ENCODE measurements at regions of chr5 and their contacts with region 1.

Region 1: GRCh38 chr5:97142521-97143254 is at the start of gene LIX1:
- DNase-seq: peak in 5 of 9 experiments; percentile 3 to 52 (median 32)
- ATAC-seq: peak; percentile 58
- H3K4me3 ChIP-seq: no peak within 1 kb of the TSS
- H3K4me3 Mint-ChIP-seq: no peak within 1 kb of the TSS
- H3K27ac ChIP-seq: no peak within 1 kb of the TSS
- H3K27ac Mint-ChIP-seq: no peak within 1 kb of the TSS
- H3K4me1 ChIP-seq: no peaks in the 10 kb centered on the region
- H3K4me1 Mint-ChIP-seq: no peaks in the 10 kb centered on the region
- H3K27me3 ChIP-seq: peaks cover 0 to 3% of the 10 kb centered on the region in 2 experiments
- H3K27me3 Mint-ChIP-seq: peaks cover 15% of the 10 kb centered on the region
- CTCF ChIP-seq: peak; percentile 29
- total RNA-seq, gene LIX1: not detected

Region 2: GRCh38 chr5:96997265-96997859 is 145.3 kb before region 1 on chr5:
- CTCF ChIA-PET with region 1: interaction called, 6 read pairs
- POLR2A ChIA-PET with region 1: no interaction called
- intact Hi-C with region 1: loop called in 1 of 2 experiments (anchors 5 kb)
- DNase-seq: peak in 4 of 9 experiments; percentile 19 to 62 (median 35)
- ATAC-seq: peak; percentile 77
- H3K4me3 ChIP-seq: no peak overlapping the region
- H3K4me3 Mint-ChIP-seq: no peak overlapping the region
- H3K27ac ChIP-seq: no peak overlapping the region
- H3K27ac Mint-ChIP-seq: peak overlapping the region; percentile 17
- H3K4me1 ChIP-seq: no peaks in the 10 kb centered on the region
- H3K4me1 Mint-ChIP-seq: peaks cover 42% of the 10 kb centered on the region
- H3K27me3 ChIP-seq: no peaks in the 10 kb centered on the region
- H3K27me3 Mint-ChIP-seq: no peaks in the 10 kb centered on the region
- CTCF ChIP-seq: peak; percentile 73

Region 3: GRCh38 chr5:97044052-97044451 is 98.6 kb before region 1 on chr5:
- CTCF ChIA-PET with region 1: no interaction called
- POLR2A ChIA-PET with region 1: no interaction called
- intact Hi-C with region 1: no loop called
- DNase-seq: no peak
- ATAC-seq: no peak
- H3K4me3 ChIP-seq: no peak overlapping the region
- H3K4me3 Mint-ChIP-seq: no peak overlapping the region
- H3K27ac ChIP-seq: no peak overlapping the region
- H3K27ac Mint-ChIP-seq: no peak overlapping the region
- H3K4me1 ChIP-seq: no peaks in the 10 kb centered on the region
- H3K4me1 Mint-ChIP-seq: no peaks in the 10 kb centered on the region
- H3K27me3 ChIP-seq: no peaks in the 10 kb centered on the region
- H3K27me3 Mint-ChIP-seq: no peaks in the 10 kb centered on the region
- CTCF ChIP-seq: no peak

Measured in CD8-positive, alpha-beta T cell (primary cell).